SK-N-SH (cell line): ENCODE measurements at regions of chr21 and their contacts with region 1.

Region 1: DNA sequence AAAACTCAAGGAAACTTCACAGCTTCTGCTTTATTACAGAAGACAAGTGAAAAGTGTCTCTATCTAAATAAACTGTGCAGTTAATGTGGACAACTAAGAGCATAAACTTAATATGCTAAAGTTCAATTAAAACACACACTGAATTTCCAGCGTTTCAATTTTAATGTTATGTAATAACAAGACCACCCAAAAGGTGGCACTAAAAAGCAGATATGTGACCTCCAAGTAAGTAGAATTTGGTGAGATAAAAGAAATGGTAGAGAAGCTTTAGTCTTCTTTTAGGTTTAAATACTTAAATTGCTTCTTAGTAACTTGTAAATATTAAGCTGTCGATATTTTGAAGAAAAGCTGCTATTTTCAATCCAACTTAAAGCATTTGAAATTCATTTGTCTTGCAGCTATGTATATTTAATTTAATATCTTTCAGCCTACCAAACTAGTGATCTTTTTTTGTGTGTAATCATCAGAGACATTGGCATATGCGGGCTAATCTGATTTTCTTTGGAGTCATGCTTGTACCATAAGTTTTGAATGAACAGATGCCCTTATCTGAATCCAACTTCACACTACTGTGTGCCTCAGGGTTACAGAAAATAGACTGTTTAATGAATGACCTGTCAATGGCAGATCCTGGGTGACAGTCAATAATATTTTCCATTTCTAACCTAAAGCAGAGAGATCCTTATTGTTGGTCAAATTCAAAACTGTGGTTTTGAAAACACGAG is 36.5 kb upstream of the ADAMTS1 start:
- DNase-seq: peak; percentile 39
- H3K4me3 ChIP-seq: no peak overlapping the region
- H3K27ac ChIP-seq: peak overlapping the region in 1 of 2 experiments; percentile 16; a peak in 1 of 4 replicates
- H3K4me1 ChIP-seq: no peaks in the 10 kb centered on the region; a peak in 1 of 4 replicates
- H3K27me3 ChIP-seq: no peaks in the 10 kb centered on the region
- CTCF ChIP-seq: peak; percentile 67
- EP300 ChIP-seq: peak in 1 of 2 experiments; percentile 63; a peak in 1 of 4 replicates
- RAD21 ChIP-seq: peak; percentile 72

Region 2: DNA sequence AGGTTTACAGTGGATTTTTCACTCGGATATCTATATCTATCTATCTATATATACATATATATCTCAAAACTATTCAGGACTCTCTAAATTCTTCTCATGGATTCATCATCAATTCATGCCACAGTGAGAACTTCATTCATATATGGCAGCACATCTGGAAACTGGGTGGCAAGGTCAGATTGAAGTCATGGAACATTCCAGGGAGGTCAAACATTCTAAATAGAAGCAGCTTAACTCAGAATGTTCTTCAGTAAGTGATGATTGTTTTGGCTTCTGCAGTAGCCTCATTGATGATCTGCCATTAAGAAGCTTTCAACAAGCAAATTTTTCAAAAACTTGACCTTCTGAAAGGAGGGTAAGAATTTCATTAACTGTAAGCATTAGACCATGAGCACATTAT is 10.5 kb after region 1 on chr21:
- CTCF ChIA-PET with region 1: interaction called, 10 read pairs
- POLR2A ChIA-PET with region 1: no interaction called
- DNase-seq: no peak
- H3K4me3 ChIP-seq: no peak overlapping the region
- H3K27ac ChIP-seq: no peak overlapping the region
- H3K4me1 ChIP-seq: peaks cover 0 to 2% of the 10 kb centered on the region in 2 experiments; a peak in 2 of 4 replicates
- H3K27me3 ChIP-seq: no peaks in the 10 kb centered on the region
- CTCF ChIP-seq: no peak
- EP300 ChIP-seq: no peak
- RAD21 ChIP-seq: no peak

Region 3: DNA sequence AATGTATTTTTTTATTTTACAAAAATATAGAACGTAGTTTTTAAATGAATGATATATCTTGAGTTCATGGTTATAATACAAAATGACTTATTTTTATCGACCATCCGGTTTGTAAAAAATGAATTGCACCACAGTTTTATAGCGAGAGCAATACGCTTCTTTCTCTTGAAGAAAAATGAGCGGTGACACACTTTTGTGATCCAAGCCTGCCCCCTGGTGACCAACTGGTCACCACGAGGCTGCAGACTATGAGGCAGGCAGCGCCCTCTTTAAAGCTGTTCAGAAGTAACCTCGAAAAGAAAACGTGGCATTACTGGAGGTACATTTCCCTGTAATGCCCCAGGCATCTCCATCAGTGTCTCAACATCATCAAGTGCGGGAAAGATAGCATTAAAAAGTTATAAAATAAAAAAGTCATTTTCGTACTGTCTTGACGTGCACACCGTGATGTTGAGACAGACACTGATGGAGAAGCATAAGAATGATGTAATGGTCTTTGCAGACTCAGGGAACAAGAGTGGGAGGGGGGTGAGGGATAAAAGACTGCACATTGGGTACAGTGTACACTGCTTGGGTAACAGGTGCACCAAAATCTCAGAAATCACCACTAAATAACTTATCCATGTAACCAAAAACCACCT is 819.4 kb after region 1 on chr21:
- CTCF ChIA-PET with region 1: interaction called, 19 read pairs
- POLR2A ChIA-PET with region 1: no interaction called
- DNase-seq: peak; percentile 59
- H3K4me3 ChIP-seq: peak overlapping the region in 1 of 2 experiments; percentile 42; a peak in 1 of 4 replicates
- H3K27ac ChIP-seq: peak overlapping the region in 1 of 2 experiments; percentile 44; a peak in 1 of 4 replicates
- H3K4me1 ChIP-seq: peaks cover 0 to 2% of the 10 kb centered on the region in 2 experiments; a peak in 2 of 4 replicates
- H3K27me3 ChIP-seq: no peaks in the 10 kb centered on the region
- CTCF ChIP-seq: peak; percentile 86
- EP300 ChIP-seq: no peak
- RAD21 ChIP-seq: peak; percentile 97